Naive thymus-derived CD4-positive, alpha-beta T cell (primary cell): ENCODE measurements at regions of chr15 and their contacts with region 1.

Region 1: DNA sequence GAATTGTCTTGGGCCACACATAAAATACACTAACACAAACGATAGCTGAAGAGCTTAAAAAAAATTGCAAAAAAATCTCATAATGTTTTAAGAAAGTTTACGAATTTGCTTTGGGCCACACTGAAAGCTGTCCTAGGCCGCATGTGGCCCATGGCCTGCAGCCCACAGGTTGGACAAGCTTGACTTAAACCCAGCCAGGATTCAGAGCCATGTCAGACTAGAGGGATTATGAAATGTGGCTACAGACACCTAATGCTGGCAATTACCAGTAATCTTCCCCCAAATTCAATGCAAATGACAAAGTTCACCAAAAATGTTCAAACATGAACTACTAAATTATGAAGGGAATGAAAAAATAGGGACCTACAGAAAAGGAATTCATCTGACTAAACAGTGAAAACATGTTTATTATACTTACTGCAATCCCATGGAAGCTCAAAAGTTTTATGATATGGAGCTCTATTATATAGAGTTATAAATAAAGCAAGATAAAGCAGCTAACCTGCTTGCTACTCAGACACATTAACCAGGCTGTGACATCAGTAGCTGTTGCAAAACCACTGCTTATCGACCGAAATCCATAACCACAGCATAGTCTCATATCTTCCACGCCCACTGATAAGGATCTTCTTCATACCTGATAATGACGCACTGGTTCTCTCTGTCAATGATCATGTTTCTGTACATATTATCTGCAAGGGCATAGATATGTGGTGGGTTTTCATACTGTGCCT is 49.2 kb downstream of the LDHAL6B start:
- DNase-seq: peak in 6 of 9 donors; percentile 0 to 44 (median 6)
- ATAC-seq: peak; percentile 79
- H3K4me3 ChIP-seq: no peak overlapping the region
- H3K4me3 Mint-ChIP-seq: peak overlapping the region in 1 of 10 donors; percentile 44
- H3K27ac ChIP-seq: no peak overlapping the region
- H3K27ac Mint-ChIP-seq: peak overlapping the region in 2 of 9 donors; percentile 10 to 35
- H3K4me1 ChIP-seq: peaks cover 0 to 3% of the 10 kb centered on the region in 2 donors
- H3K4me1 Mint-ChIP-seq: peaks cover 0 to 44% (median 4%) of the 10 kb centered on the region in 7 donors
- H3K27me3 ChIP-seq: no peaks in the 10 kb centered on the region
- H3K27me3 Mint-ChIP-seq: no peaks in the 10 kb centered on the region

Region 2: GRCh38 chr15:59217876-59218498 is 37.8 kb before region 1 on chr15:
- CTCF ChIA-PET with region 1: no interaction called
- POLR2A ChIA-PET with region 1: no interaction called
- intact Hi-C with region 1: no loop called
- DNase-seq: no peak
- ATAC-seq: no peak
- H3K4me3 ChIP-seq: no peak overlapping the region
- H3K4me3 Mint-ChIP-seq: no peak overlapping the region
- H3K27ac ChIP-seq: no peak overlapping the region
- H3K27ac Mint-ChIP-seq: no peak overlapping the region
- H3K4me1 ChIP-seq: no peaks in the 10 kb centered on the region
- H3K4me1 Mint-ChIP-seq: peaks cover 0 to 6% (median 0%) of the 10 kb centered on the region in 7 donors
- H3K27me3 ChIP-seq: no peaks in the 10 kb centered on the region
- H3K27me3 Mint-ChIP-seq: peaks cover 0 to 7% (median 0%) of the 10 kb centered on the region in 5 donors

Region 3: DNA sequence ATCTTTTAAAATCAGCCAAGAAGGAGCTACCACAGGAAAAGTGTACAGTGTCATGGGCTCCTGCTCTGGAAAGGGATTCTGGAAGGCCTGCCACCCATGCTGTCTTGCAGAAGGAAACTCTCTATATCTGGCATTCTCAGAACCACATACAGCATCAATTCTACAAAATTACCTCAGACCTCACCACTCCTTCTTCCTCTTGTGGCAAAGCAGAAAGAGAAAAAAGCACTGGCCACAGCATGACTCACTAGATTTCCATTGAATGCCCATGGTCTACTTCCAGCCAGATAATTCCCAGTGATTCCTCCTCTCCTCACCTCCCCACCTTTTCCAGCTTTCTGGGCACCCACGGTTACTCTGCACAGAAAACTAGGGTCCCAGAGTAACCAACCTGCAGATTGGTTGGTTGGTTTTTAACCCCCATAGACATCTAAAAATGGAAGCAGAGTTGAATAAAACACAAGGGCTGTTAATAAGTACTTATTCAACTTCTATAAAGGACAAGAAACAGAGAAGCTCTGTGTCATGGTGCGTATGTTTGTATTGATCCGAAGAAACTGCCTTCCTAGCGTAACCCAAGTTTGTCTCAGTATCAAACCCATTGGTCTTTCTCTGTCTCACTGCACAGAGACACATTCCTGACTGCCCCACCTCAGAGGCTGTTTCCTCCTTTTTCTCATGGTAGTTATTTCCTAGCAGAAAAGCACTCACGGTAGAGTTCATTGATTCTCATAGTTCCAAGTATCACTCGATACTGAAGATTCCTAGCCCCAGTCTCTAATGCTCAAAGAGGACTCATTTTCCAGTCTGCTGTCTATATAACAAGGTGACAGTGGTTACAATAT is 18.5 kb after region 1 on chr15:
- CTCF ChIA-PET with region 1: no interaction called
- POLR2A ChIA-PET with region 1: no interaction called
- intact Hi-C with region 1: loop called in 1 of 2 experiments (anchors 1 kb)
- DNase-seq: no peak
- ATAC-seq: peak; percentile 40
- H3K4me3 ChIP-seq: no peak overlapping the region
- H3K4me3 Mint-ChIP-seq: peak overlapping the region in 1 of 10 donors; percentile 72
- H3K27ac ChIP-seq: no peak overlapping the region
- H3K27ac Mint-ChIP-seq: peak overlapping the region in 1 of 9 donors; percentile 86
- H3K4me1 ChIP-seq: no peaks in the 10 kb centered on the region
- H3K4me1 Mint-ChIP-seq: peaks cover 0 to 66% (median 0%) of the 10 kb centered on the region in 7 donors
- H3K27me3 ChIP-seq: no peaks in the 10 kb centered on the region
- H3K27me3 Mint-ChIP-seq: peaks cover 0 to 12% (median 0%) of the 10 kb centered on the region in 5 donors

Region 4: DNA sequence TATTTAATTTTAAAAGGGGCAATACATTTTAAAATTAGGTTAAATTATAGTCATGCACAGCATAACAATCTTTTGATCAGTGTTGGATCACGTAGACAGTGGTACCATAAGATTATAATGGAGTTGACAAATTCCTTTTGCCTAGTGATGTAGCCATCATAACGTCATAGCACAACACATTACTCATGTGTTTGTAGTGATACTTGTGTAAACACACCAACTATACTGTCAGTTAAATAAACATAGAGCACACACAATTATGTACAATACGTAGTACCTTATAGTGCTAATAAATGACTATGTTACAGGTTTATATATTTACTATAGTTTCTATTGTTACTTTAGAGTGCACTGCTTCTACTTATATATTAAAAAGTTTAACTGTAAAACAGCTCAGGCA is 779.5 kb after region 1 on chr15:
- CTCF ChIA-PET with region 1: no interaction called
- POLR2A ChIA-PET with region 1: no interaction called
- intact Hi-C with region 1: no loop called
- DNase-seq: no peak
- ATAC-seq: no peak
- H3K4me3 ChIP-seq: no peak overlapping the region
- H3K4me3 Mint-ChIP-seq: no peak overlapping the region
- H3K27ac ChIP-seq: no peak overlapping the region
- H3K27ac Mint-ChIP-seq: no peak overlapping the region
- H3K4me1 ChIP-seq: no peaks in the 10 kb centered on the region
- H3K4me1 Mint-ChIP-seq: no peaks in the 10 kb centered on the region
- H3K27me3 ChIP-seq: no peaks in the 10 kb centered on the region
- H3K27me3 Mint-ChIP-seq: peaks cover 0 to 13% (median 1%) of the 10 kb centered on the region in 5 donors